Activated T-helper 2 cell treated with anti-CD3 and anti-CD28 coated beads, Interferon-gamma antibody, Interleukin-2, Interleukin-4, amounts not matched to agents 10 μg/mL and 5 μg/mL and 100 μg/mL, durations not matched to agents 14 hours and 24 hours and 36 hours (primary cell): ENCODE measurements at regions of chr2 and their contacts with region 1.

Region 1: DNA sequence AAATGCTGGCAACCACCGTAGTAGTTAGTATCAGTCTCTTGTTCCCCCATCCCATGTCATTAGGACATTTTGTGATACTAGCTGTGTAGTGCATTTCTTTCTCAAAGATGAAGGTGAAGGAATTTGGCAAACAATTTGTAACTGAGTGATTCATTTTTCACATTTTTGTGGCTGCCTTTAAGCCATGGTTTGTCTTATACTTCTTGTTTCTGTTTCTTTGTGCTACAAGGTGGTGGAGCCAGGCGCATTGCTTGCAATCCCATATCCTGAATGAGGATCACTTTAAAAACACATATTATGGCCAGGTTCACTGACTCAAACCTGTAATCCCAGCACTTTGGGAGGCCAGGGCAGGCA is 40.6 kb downstream of the GPD2 start:
- DNase-seq: no peak
- H3K4me3 Mint-ChIP-seq: no peak overlapping the region
- H3K27ac Mint-ChIP-seq: peak overlapping the region; percentile 66
- H3K4me1 Mint-ChIP-seq: peaks cover 53% of the 10 kb centered on the region
- H3K27me3 Mint-ChIP-seq: no peaks in the 10 kb centered on the region

Region 2: GRCh38 chr2:156099382-156099781 is 377.4 kb before region 1 on chr2:
- intact Hi-C with region 1: no loop called
- DNase-seq: no peak
- H3K4me3 Mint-ChIP-seq: no peak overlapping the region
- H3K27ac Mint-ChIP-seq: no peak overlapping the region
- H3K4me1 Mint-ChIP-seq: no peaks in the 10 kb centered on the region
- H3K27me3 Mint-ChIP-seq: no peaks in the 10 kb centered on the region

Region 3: DNA sequence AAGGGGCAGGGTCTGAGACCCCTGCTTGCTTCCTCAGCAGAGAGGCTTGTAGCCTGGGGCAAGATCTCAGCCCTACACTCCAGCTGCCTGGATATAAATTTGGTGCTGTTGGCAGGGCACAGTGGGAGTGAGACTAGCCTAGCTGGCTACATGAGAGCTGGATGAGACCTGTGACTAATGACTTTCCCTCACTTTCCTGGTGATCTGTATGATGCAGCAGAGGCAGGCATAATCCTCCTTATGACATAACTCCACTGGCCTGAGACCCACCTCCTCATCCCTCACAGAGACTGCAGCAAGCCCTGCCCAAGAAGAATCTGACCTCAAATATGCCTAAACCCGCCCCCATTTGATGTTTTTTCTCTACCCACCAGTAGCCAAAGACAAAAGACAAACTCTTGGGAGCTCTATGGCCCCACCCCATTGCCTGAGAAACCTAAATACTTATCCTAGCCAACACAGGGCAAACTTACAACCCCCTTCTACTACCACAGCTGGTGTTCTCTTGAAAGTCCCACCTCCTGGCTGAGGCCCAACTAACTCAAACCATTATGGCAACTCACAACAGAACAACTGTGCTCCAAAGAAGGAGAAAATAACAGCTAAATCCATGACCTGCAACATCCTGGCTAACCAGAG is 247.0 kb before region 1 on chr2:
- intact Hi-C with region 1: no loop called
- DNase-seq: no peak
- H3K4me3 Mint-ChIP-seq: no peak overlapping the region
- H3K27ac Mint-ChIP-seq: no peak overlapping the region
- H3K4me1 Mint-ChIP-seq: no peaks in the 10 kb centered on the region
- H3K27me3 Mint-ChIP-seq: no peaks in the 10 kb centered on the region

Region 4: GRCh38 chr2:156455451-156455901 is 21.4 kb before region 1 on chr2:
- intact Hi-C with region 1: loop called (anchors 1 kb)
- DNase-seq: no peak
- H3K4me3 Mint-ChIP-seq: no peak overlapping the region
- H3K27ac Mint-ChIP-seq: no peak overlapping the region
- H3K4me1 Mint-ChIP-seq: peaks cover 33% of the 10 kb centered on the region
- H3K27me3 Mint-ChIP-seq: no peaks in the 10 kb centered on the region

Region 5: GRCh38 chr2:156580501-156580900 is 103.7 kb after region 1 on chr2:
- intact Hi-C with region 1: no loop called
- DNase-seq: no peak
- H3K4me3 Mint-ChIP-seq: no peak overlapping the region
- H3K27ac Mint-ChIP-seq: no peak overlapping the region
- H3K4me1 Mint-ChIP-seq: peaks cover 24% of the 10 kb centered on the region
- H3K27me3 Mint-ChIP-seq: no peaks in the 10 kb centered on the region